Calu3 (cell line): ENCODE measurements at regions of chr4 and their contacts with region 1.

Region 1: GRCh38 chr4:105966029-105966428 is 70.8 kb downstream of the NPNT start:
- DNase-seq: no peak
- H3K4me3 Mint-ChIP-seq: peak overlapping the region; percentile 52
- H3K27ac Mint-ChIP-seq: peak overlapping the region; percentile 83
- H3K4me1 Mint-ChIP-seq: peaks cover 45% of the 10 kb centered on the region
- H3K27me3 Mint-ChIP-seq: no peaks in the 10 kb centered on the region
- CTCF ChIP-seq: no peak

Region 2: GRCh38 chr4:105822061-105822460 is 144.0 kb before region 1 on chr4:
- CTCF ChIA-PET with region 1: no interaction called
- intact Hi-C with region 1: no loop called
- DNase-seq: no peak
- H3K4me3 Mint-ChIP-seq: no peak overlapping the region
- H3K27ac Mint-ChIP-seq: no peak overlapping the region
- H3K4me1 Mint-ChIP-seq: no peaks in the 10 kb centered on the region
- H3K27me3 Mint-ChIP-seq: no peaks in the 10 kb centered on the region
- CTCF ChIP-seq: no peak

Region 3: GRCh38 chr4:105895583-105896460 is 70.2 kb before region 1 on chr4:
- CTCF ChIA-PET with region 1: interaction called, 3 read pairs
- intact Hi-C with region 1: loop called (anchors 5 kb)
- DNase-seq: peak; percentile 53
- H3K4me3 Mint-ChIP-seq: peak overlapping the region; percentile 74
- H3K27ac Mint-ChIP-seq: peak overlapping the region; percentile 21
- H3K4me1 Mint-ChIP-seq: peaks cover 49% of the 10 kb centered on the region
- H3K27me3 Mint-ChIP-seq: no peaks in the 10 kb centered on the region
- CTCF ChIP-seq: no peak

Region 4: DNA sequence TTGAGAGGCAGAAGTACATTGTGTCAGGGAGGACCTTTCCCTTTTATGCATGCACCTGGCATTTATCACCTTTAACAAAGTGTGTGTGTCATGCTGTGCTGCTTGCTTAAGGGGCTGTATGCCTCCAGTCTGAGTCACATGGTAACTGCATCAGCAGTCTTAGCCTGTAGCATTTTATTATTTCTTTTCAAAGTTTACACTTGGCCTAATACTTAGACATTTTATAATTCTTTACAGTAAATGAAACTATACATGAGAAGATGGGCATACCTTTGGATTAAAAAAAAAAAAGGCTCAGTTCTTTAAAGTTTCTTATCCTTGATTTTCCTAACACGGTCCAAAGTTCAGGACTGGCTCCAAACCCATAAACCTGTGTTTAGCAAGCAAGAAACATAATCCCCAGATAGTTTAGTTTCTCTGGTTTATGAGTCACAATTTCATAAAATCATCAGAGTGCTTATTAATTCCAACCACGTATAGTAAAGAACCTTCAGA is 56.2 kb before region 1 on chr4:
- CTCF ChIA-PET with region 1: no interaction called
- intact Hi-C with region 1: loop called (anchors 5 kb)
- DNase-seq: peak; percentile 28
- H3K4me3 Mint-ChIP-seq: no peak overlapping the region
- H3K27ac Mint-ChIP-seq: peak overlapping the region; percentile 76
- H3K4me1 Mint-ChIP-seq: peaks cover 12% of the 10 kb centered on the region
- H3K27me3 Mint-ChIP-seq: no peaks in the 10 kb centered on the region
- CTCF ChIP-seq: no peak

Region 5: GRCh38 chr4:105996845-105997244 is 30.8 kb after region 1 on chr4:
- CTCF ChIA-PET with region 1: no interaction called
- intact Hi-C with region 1: loop called (anchors 2 kb)
- DNase-seq: peak; percentile 15
- H3K4me3 Mint-ChIP-seq: peak overlapping the region; percentile 1
- H3K27ac Mint-ChIP-seq: no peak overlapping the region
- H3K4me1 Mint-ChIP-seq: peaks cover 31% of the 10 kb centered on the region
- H3K27me3 Mint-ChIP-seq: no peaks in the 10 kb centered on the region
- CTCF ChIP-seq: no peak

Region 6: GRCh38 chr4:106022454-106022853 is 56.4 kb after region 1 on chr4:
- CTCF ChIA-PET with region 1: no interaction called
- intact Hi-C with region 1: no loop called
- DNase-seq: no peak
- H3K4me3 Mint-ChIP-seq: no peak overlapping the region
- H3K27ac Mint-ChIP-seq: no peak overlapping the region
- H3K4me1 Mint-ChIP-seq: peaks cover 8% of the 10 kb centered on the region
- H3K27me3 Mint-ChIP-seq: no peaks in the 10 kb centered on the region
- CTCF ChIP-seq: no peak

Region 7: DNA sequence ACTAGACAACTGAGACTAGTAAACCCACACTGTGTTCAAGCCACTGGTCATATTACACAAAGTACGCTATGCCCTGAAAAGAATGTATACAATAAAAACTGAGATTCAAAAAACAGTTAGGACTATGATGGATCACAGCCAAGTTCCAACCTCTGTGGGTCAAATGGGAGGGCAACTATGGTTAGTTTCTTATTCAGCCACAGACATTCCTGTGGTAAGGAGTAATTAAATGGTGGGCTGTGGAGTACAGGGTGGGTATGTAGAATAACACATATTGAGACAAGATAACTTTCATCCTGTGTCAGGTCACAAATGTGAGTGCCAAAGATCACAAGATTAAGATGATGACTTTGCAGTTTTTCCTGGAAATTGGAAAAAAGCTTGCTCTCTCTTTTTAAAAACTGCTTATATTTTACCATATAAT is 96.4 kb after region 1 on chr4:
- CTCF ChIA-PET with region 1: no interaction called
- intact Hi-C with region 1: loop called (anchors 2 kb)
- DNase-seq: peak; percentile 20
- H3K4me3 Mint-ChIP-seq: no peak overlapping the region
- H3K27ac Mint-ChIP-seq: no peak overlapping the region
- H3K4me1 Mint-ChIP-seq: peaks cover 23% of the 10 kb centered on the region
- H3K27me3 Mint-ChIP-seq: no peaks in the 10 kb centered on the region
- CTCF ChIP-seq: no peak